Mammary epithelial cell (primary cell): ENCODE measurements at regions of chr6 and their contacts with region 1.

Region 1: DNA sequence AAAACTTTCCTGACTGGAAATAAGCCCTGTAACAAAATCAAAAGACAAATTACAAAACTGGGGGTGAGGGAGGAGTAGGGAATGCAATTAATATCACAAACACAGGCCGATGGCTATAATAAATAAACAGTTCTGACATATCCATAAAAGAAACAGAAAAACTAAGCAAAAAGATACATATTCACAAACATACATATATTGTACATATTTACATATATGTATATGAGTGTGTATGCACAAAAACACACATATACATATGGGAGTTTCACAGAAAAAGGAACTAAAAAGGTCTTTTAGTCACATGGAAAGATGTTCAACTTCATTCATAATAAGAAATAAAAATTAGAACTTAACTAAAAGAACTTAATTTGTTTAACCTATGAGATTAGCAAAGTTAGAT is 292.7 kb downstream of the TFAP2A start:
- DNase-seq: no peak
- H3K4me3 ChIP-seq: no peak overlapping the region
- H3K27ac ChIP-seq: no peak overlapping the region
- H3K4me1 ChIP-seq: no peaks in the 10 kb centered on the region
- H3K27me3 ChIP-seq: no peaks in the 10 kb centered on the region
- CTCF ChIP-seq: no peak

Region 2: GRCh38 chr6:9248145-9248544 is 874.0 kb before region 1 on chr6:
- CTCF ChIA-PET with region 1: no interaction called
- dilution Hi-C with region 1: no loop called
- in situ Hi-C with region 1: no loop called
- intact Hi-C with region 1: no loop called
- DNase-seq: peak; percentile 22
- H3K4me3 ChIP-seq: no peak overlapping the region
- H3K27ac ChIP-seq: no peak overlapping the region
- H3K4me1 ChIP-seq: no peaks in the 10 kb centered on the region
- H3K27me3 ChIP-seq: no peaks in the 10 kb centered on the region
- CTCF ChIP-seq: no peak

Region 3: GRCh38 chr6:10019851-10020250 is 102.3 kb before region 1 on chr6:
- CTCF ChIA-PET with region 1: no interaction called
- dilution Hi-C with region 1: loop called (anchors 5 kb)
- in situ Hi-C with region 1: no loop called
- intact Hi-C with region 1: no loop called
- DNase-seq: no peak
- H3K4me3 ChIP-seq: no peak overlapping the region
- H3K27ac ChIP-seq: no peak overlapping the region
- H3K4me1 ChIP-seq: no peaks in the 10 kb centered on the region
- H3K27me3 ChIP-seq: no peaks in the 10 kb centered on the region
- CTCF ChIP-seq: no peak